H1 (cell line): ENCODE measurements at regions of chr14 and their contacts with region 1.

Region 1: GRCh38 chr14:83463500-83464098 is 1929.9 kb upstream of the SEL1L start:
- DNase-seq: peak; percentile 5 to 56
- H3K4me3 ChIP-seq: no peak overlapping the region
- H3K27ac ChIP-seq: no peak overlapping the region
- H3K4me1 ChIP-seq: no peaks in the 10 kb centered on the region
- H3K27me3 ChIP-seq: no peaks in the 10 kb centered on the region
- CTCF ChIP-seq: peak in 2 of 3 experiments; percentile 56 to 70; a peak in 3 of 4 replicates
- EP300 ChIP-seq: no peak
- POLR2A ChIP-seq: no peak
- RAD21 ChIP-seq: peak; percentile 79 to 85

Region 2: GRCh38 chr14:83300476-83301064 is 163.0 kb before region 1 on chr14:
- CTCF ChIA-PET with region 1: interaction called, 23 read pairs
- POLR2A ChIA-PET with region 1: no interaction called
- DNase-seq: no peak
- H3K4me3 ChIP-seq: no peak overlapping the region
- H3K27ac ChIP-seq: no peak overlapping the region
- H3K4me1 ChIP-seq: no peaks in the 10 kb centered on the region
- H3K27me3 ChIP-seq: no peaks in the 10 kb centered on the region
- CTCF ChIP-seq: peak in 2 of 3 experiments; percentile 53 to 76; a peak in 2 of 4 replicates
- EP300 ChIP-seq: no peak
- POLR2A ChIP-seq: no peak
- RAD21 ChIP-seq: peak; percentile 86 to 89

Region 3: GRCh38 chr14:83483063-83483462 is 19.5 kb after region 1 on chr14:
- CTCF ChIA-PET with region 1: interaction called, 11 read pairs
- POLR2A ChIA-PET with region 1: no interaction called
- DNase-seq: no peak
- H3K4me3 ChIP-seq: no peak overlapping the region
- H3K27ac ChIP-seq: no peak overlapping the region
- H3K4me1 ChIP-seq: no peaks in the 10 kb centered on the region
- H3K27me3 ChIP-seq: no peaks in the 10 kb centered on the region
- CTCF ChIP-seq: no peak
- EP300 ChIP-seq: no peak
- POLR2A ChIP-seq: no peak
- RAD21 ChIP-seq: no peak

Region 4: GRCh38 chr14:83529531-83529930 is 65.9 kb after region 1 on chr14:
- CTCF ChIA-PET with region 1: no interaction called
- POLR2A ChIA-PET with region 1: no interaction called
- DNase-seq: no peak
- H3K4me3 ChIP-seq: no peak overlapping the region
- H3K27ac ChIP-seq: no peak overlapping the region
- H3K4me1 ChIP-seq: no peaks in the 10 kb centered on the region
- H3K27me3 ChIP-seq: no peaks in the 10 kb centered on the region
- CTCF ChIP-seq: no peak
- EP300 ChIP-seq: no peak
- POLR2A ChIP-seq: no peak
- RAD21 ChIP-seq: no peak